Ascending aorta (tissue), 2 donors: ENCODE measurements at regions of chr4 and their contacts with region 1.

Region 1: GRCh38 chr4:41120297-41121217 is 93.8 kb downstream of the APBB2 start:
- DNase-seq: peak; percentile 20 to 85
- H3K4me3 ChIP-seq: peak overlapping the region; percentile 30 to 46
- H3K27ac ChIP-seq: peak overlapping the region; percentile 69 to 70
- H3K4me1 ChIP-seq: peaks cover 4 to 37% of the 10 kb centered on the region in 2 donors
- H3K27me3 ChIP-seq: no peaks in the 10 kb centered on the region
- CTCF ChIP-seq: no peak

Region 2: DNA sequence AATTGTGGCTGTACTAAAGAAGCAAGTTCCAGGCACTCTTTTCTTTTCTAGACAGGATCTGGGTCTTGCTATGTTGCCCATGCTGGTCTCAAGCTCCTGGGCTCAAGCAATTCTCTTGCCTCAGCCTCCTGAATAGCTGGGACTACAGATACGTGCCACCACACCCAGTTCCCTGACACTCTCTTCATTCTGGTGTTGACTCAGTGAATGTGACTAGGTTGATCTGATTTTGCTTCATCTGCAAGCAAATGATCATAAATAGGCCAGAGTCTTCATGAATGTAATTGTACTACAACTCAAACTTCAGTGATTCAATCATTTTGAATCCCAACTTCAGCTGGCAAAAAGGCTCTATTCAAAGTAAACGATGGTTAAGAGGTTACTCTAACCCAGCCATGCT is 15.2 kb after region 1 on chr4:
- intact Hi-C with region 1: loop called (anchors 1 kb)
- DNase-seq: no peak
- H3K4me3 ChIP-seq: no peak overlapping the region
- H3K27ac ChIP-seq: peak overlapping the region; percentile 23 to 53
- H3K4me1 ChIP-seq: peaks cover 0 to 38% of the 10 kb centered on the region in 2 donors
- H3K27me3 ChIP-seq: no peaks in the 10 kb centered on the region
- CTCF ChIP-seq: no peak

Region 3: GRCh38 chr4:41143311-41144039 is 22.9 kb after region 1 on chr4:
- intact Hi-C with region 1: loop called (anchors 2 kb)
- DNase-seq: peak in 1 of 2 donors; percentile 81
- H3K4me3 ChIP-seq: peak overlapping the region; percentile 24 to 45
- H3K27ac ChIP-seq: peak overlapping the region; percentile 80 to 92
- H3K4me1 ChIP-seq: peaks cover 27 to 60% of the 10 kb centered on the region in 2 donors
- H3K27me3 ChIP-seq: no peaks in the 10 kb centered on the region
- CTCF ChIP-seq: no peak

Region 4: GRCh38 chr4:41177016-41177415 is 56.5 kb after region 1 on chr4:
- intact Hi-C with region 1: no loop called
- DNase-seq: no peak
- H3K4me3 ChIP-seq: no peak overlapping the region
- H3K27ac ChIP-seq: peak overlapping the region in 1 of 2 donors; percentile 63
- H3K4me1 ChIP-seq: peaks cover 10 to 37% of the 10 kb centered on the region in 2 donors
- H3K27me3 ChIP-seq: no peaks in the 10 kb centered on the region
- CTCF ChIP-seq: peak in 1 of 3 experiments; percentile 13

Region 5: GRCh38 chr4:41505161-41505661 is 384.7 kb after region 1 on chr4:
- intact Hi-C with region 1: no loop called
- DNase-seq: peak; percentile 21 to 86
- H3K4me3 ChIP-seq: no peak overlapping the region
- H3K27ac ChIP-seq: peak overlapping the region; percentile 71 to 75
- H3K4me1 ChIP-seq: peaks cover 3 to 36% of the 10 kb centered on the region in 2 donors
- H3K27me3 ChIP-seq: no peaks in the 10 kb centered on the region
- CTCF ChIP-seq: no peak